Activated B cell treated with CpG ODN at 0.5 μM for 24 hours (primary cell): ENCODE measurements at regions of chr2 and their contacts with region 1.

Region 1: DNA sequence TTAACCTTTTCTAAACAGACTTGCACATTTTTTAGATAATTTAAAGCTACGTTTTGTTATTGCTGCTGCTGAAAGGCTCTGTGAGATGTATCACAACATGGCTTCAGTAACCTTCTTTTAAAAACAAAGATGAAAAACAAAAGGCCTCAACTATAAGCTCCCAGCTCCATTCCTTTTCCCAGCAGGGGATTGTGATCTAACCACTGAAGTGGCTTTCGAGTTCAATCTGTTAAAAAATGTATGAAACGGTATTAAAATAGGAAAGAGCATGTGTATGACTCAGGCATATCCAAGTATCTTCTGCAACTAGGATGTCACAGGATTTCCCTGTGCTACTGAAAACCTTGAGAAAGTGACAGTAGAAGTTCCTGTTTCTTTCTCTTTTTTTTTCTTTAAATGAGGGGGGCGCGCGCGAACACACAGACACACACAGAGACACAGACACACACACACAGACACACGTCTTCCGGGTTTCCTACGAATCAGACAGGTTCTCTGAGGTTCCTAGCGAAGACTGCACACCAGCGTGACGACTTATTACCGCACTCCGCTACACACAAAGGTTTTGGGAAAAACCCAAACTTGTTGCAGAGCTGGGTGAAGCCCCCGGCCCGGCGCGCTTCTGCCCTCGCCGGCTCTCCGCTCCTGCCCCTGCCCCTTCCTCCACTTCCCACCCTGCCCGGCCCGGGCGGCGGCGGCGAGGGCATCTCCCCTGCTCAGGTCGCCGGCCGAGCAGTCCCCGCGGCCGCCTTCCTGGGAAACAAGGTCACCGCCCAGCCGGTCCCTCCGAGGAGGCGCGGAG is 86.8 kb downstream of the RBMS1 start:
- DNase-seq: peak; percentile 71
- ATAC-seq: peak; percentile 74
- H3K4me3 Mint-ChIP-seq: peak overlapping the region; percentile 91
- H3K27ac Mint-ChIP-seq: peak overlapping the region; percentile 92
- H3K4me1 Mint-ChIP-seq: peaks cover 77% of the 10 kb centered on the region
- H3K27me3 Mint-ChIP-seq: no peaks in the 10 kb centered on the region
- CTCF ChIP-seq: no peak

Region 2: GRCh38 chr2:160269803-160270570 is 136.8 kb before region 1 on chr2:
- CTCF ChIA-PET with region 1: no interaction called
- POLR2A ChIA-PET with region 1: interaction called, 3 read pairs
- intact Hi-C with region 1: loop called (anchors 2 kb)
- DNase-seq: peak; percentile 64
- ATAC-seq: peak; percentile 96
- H3K4me3 Mint-ChIP-seq: peak overlapping the region; percentile 85
- H3K27ac Mint-ChIP-seq: peak overlapping the region; percentile 59
- H3K4me1 Mint-ChIP-seq: peaks cover 11% of the 10 kb centered on the region
- H3K27me3 Mint-ChIP-seq: no peaks in the 10 kb centered on the region
- CTCF ChIP-seq: no peak

Region 3: DNA sequence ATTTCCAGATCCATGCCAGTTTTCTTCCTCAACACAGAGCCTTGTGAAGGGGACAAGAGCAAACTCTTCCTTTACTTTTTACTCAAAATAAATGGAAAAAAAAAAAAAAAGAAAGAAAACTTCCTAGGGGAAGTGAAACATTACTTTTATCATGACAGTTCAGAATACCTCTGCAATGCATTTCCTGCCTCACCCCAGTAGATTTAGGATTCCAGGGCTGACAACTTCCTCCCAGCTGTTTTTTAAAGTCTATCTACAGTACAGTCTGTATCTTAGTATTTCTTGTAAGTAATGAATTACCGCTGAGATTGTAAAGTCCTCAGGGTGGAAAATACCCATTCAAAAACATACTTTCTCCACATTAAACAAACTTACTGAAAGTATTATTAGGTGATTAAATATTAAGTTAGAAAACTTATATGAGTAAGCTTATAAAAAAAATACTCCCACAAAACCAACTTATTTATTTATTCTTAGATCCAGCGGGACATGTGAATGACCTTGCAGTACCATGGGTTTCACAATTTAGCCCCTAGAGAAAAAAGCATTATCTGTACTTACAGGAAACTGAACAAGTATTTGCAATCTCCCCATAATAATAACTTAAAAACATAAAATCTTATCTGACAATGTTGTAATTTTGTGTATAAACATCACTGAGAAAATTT is 30.9 kb before region 1 on chr2:
- CTCF ChIA-PET with region 1: no interaction called
- POLR2A ChIA-PET with region 1: interaction called, 10 read pairs
- intact Hi-C with region 1: loop called (anchors 2 kb)
- DNase-seq: no peak
- ATAC-seq: peak; percentile 42
- H3K4me3 Mint-ChIP-seq: no peak overlapping the region
- H3K27ac Mint-ChIP-seq: no peak overlapping the region
- H3K4me1 Mint-ChIP-seq: peaks cover 75% of the 10 kb centered on the region
- H3K27me3 Mint-ChIP-seq: no peaks in the 10 kb centered on the region
- CTCF ChIP-seq: no peak

Region 4: GRCh38 chr2:160394153-160394552 is 12.6 kb before region 1 on chr2:
- CTCF ChIA-PET with region 1: no interaction called
- POLR2A ChIA-PET with region 1: interaction called, 3 read pairs
- intact Hi-C with region 1: loop called (anchors 1 kb)
- DNase-seq: no peak
- ATAC-seq: peak; percentile 98
- H3K4me3 Mint-ChIP-seq: peak overlapping the region; percentile 66
- H3K27ac Mint-ChIP-seq: peak overlapping the region; percentile 79
- H3K4me1 Mint-ChIP-seq: peaks cover 62% of the 10 kb centered on the region
- H3K27me3 Mint-ChIP-seq: no peaks in the 10 kb centered on the region
- CTCF ChIP-seq: no peak

Region 5: GRCh38 chr2:160472839-160473251 is 66.1 kb after region 1 on chr2:
- CTCF ChIA-PET with region 1: no interaction called
- POLR2A ChIA-PET with region 1: no interaction called
- intact Hi-C with region 1: no loop called
- DNase-seq: no peak
- ATAC-seq: no peak
- H3K4me3 Mint-ChIP-seq: no peak overlapping the region
- H3K27ac Mint-ChIP-seq: no peak overlapping the region
- H3K4me1 Mint-ChIP-seq: no peaks in the 10 kb centered on the region
- H3K27me3 Mint-ChIP-seq: peaks cover 10% of the 10 kb centered on the region
- CTCF ChIP-seq: no peak

Region 6: DNA sequence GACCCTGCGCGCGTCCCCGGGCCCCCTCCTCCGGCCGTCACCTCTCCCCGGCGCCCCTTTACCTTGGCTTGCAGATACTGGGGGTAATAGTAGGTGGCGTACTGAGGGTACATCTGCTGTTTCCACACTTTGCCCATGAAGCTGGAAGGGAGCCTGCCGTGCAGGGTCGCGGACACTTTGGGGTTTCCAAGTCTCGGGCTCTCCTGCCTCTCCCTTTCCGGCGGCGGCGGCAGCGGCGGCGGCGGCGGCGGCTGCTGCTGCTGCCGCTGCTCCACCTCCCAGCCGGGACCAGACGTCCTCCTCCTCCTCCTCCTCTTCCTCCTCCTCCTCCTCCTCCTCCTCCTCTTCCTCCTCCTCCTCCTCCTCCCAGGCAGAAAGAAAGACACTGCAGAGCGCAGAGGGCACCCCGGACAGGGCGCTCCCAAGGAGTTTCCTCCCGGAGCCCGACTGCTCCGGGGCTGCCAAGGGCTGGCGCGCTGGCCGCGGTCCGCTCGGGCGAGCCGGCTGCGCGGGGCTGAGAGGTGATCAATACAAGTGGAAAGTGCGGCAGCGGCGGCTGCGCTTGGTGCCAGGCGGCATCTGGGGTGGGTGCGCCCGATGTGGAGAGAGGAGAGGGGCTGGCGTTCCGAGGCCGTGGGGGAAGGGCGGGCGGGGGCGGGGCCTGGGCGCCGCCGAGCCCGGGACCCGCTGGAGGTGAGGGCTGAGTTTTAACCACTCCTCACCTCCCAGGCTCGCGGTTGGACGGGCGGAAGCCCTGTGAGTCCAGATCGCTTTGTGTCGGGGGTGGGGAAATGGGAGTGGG is 86.6 kb after region 1 on chr2 and contains the start of gene RBMS1:
- CTCF ChIA-PET with region 1: no interaction called
- POLR2A ChIA-PET with region 1: no interaction called
- intact Hi-C with region 1: loop called (anchors 5 kb)
- DNase-seq: peak; percentile 22
- ATAC-seq: peak; percentile 56
- H3K4me3 Mint-ChIP-seq: peak within 1 kb of the TSS; percentile 82
- H3K27ac Mint-ChIP-seq: no peak within 1 kb of the TSS
- H3K4me1 Mint-ChIP-seq: peaks cover 6% of the 10 kb centered on the region
- H3K27me3 Mint-ChIP-seq: peaks cover 34% of the 10 kb centered on the region
- CTCF ChIP-seq: no peak
- total RNA-seq, gene RBMS1: 23.9 and 30.9 TPM in 2 replicates